Common myeloid progenitor, CD34-positive (primary cell): ENCODE measurements at regions of chr1 and their contacts with region 1.

Region 1: GRCh38 chr1:50796272-50796671 is 163.8 kb downstream of the FAF1 start:
- DNase-seq: peak; percentile 14 to 70 (median 54)
- H3K4me3 ChIP-seq: no peak overlapping the region
- H3K27ac ChIP-seq: no peak overlapping the region
- H3K4me1 ChIP-seq: peaks cover 0 to 7% (median 0%) of the 10 kb centered on the region in 4 experiments
- H3K27me3 ChIP-seq: no peaks in the 10 kb centered on the region

Region 2: GRCh38 chr1:50774759-50775351 is 21.4 kb before region 1 on chr1:
- CTCF ChIA-PET with region 1: interaction called, 11 read pairs
- POLR2A ChIA-PET with region 1: no interaction called
- DNase-seq: peak; percentile 55 to 71 (median 67)
- H3K4me3 ChIP-seq: no peak overlapping the region
- H3K27ac ChIP-seq: no peak overlapping the region
- H3K4me1 ChIP-seq: no peaks in the 10 kb centered on the region
- H3K27me3 ChIP-seq: no peaks in the 10 kb centered on the region

Region 3: GRCh38 chr1:50812346-50812745 is 16.1 kb after region 1 on chr1:
- CTCF ChIA-PET with region 1: no interaction called
- POLR2A ChIA-PET with region 1: no interaction called
- DNase-seq: no peak
- H3K4me3 ChIP-seq: no peak overlapping the region
- H3K27ac ChIP-seq: no peak overlapping the region
- H3K4me1 ChIP-seq: no peaks in the 10 kb centered on the region
- H3K27me3 ChIP-seq: no peaks in the 10 kb centered on the region